Activated CD4-positive, alpha-beta T cell treated with anti-CD3 and anti-CD28 coated beads for 36 hours (primary cell): ENCODE measurements at regions of chr9 and their contacts with region 1.

Region 1: GRCh38 chr9:132354637-132355355 is at the start of gene SETX:
- DNase-seq: peak; percentile 98
- ATAC-seq: peak; percentile 81
- H3K4me3 Mint-ChIP-seq: peak within 1 kb of the TSS; percentile 79
- H3K27ac Mint-ChIP-seq: peak within 1 kb of the TSS; percentile 98
- H3K4me1 Mint-ChIP-seq: peaks cover 36% of the 10 kb centered on the region
- H3K27me3 Mint-ChIP-seq: no peaks in the 10 kb centered on the region
- total RNA-seq, gene SETX: 37.5 to 38.1 TPM

Region 2: DNA sequence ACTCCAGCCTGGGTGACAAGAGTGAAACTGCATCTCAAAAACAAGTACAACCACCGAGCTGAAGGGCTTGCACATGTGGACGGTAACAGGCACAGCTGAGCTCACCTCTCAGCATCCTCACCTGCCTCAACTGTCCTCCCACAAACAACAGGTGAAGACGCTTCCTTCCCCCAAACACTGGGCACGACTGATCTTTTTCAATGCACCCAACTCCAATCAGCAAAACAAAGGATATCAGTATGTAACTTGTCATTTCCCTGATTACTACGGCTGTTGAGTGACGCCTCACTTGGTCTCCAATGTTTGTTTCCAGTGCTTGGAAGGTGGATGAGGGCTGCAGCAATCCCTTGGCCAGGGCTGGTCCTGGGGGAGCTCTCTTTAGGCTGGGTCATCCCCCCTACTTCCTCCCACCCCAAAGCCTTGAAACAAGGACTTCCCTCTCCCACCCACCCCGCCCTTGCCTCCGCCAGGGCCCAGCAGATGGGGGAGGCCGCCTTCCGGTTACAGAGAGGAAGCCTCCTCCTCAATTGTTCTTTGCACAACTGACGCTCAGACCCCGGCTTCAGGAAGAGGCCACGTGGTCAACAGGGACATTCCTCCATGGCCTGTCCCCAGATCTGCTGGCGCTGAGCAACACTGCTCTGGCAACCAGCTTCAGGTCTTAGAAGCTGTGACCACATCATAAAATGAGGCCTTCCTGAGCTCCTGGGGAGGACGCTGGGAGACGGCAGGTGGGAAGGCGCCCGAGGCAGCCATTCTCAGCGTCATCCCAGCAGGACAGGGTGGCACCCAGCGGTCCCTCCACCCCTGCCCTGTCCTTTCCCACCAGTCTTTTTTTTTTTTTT is 1084.4 kb before region 1 on chr9:
- CTCF ChIA-PET with region 1: no interaction called
- POLR2A ChIA-PET with region 1: no interaction called
- intact Hi-C with region 1: loop called in 1 of 2 experiments (anchors 2 kb)
- DNase-seq: peak; percentile 77
- ATAC-seq: peak; percentile 13
- H3K4me3 Mint-ChIP-seq: peak overlapping the region; percentile 90
- H3K27ac Mint-ChIP-seq: peak overlapping the region; percentile 100
- H3K4me1 Mint-ChIP-seq: peaks cover 58% of the 10 kb centered on the region
- H3K27me3 Mint-ChIP-seq: no peaks in the 10 kb centered on the region

Region 3: GRCh38 chr9:131650254-131650653 is 704.5 kb before region 1 on chr9:
- CTCF ChIA-PET with region 1: no interaction called
- POLR2A ChIA-PET with region 1: no interaction called
- intact Hi-C with region 1: no loop called
- DNase-seq: no peak
- ATAC-seq: no peak
- H3K4me3 Mint-ChIP-seq: no peak overlapping the region
- H3K27ac Mint-ChIP-seq: no peak overlapping the region
- H3K4me1 Mint-ChIP-seq: peaks cover 59% of the 10 kb centered on the region
- H3K27me3 Mint-ChIP-seq: no peaks in the 10 kb centered on the region

Region 4: GRCh38 chr9:132006677-132007370 is 348.0 kb before region 1 on chr9:
- CTCF ChIA-PET with region 1: no interaction called
- POLR2A ChIA-PET with region 1: no interaction called
- intact Hi-C with region 1: loop called in 1 of 2 experiments (anchors 2 kb)
- DNase-seq: peak; percentile 65
- ATAC-seq: peak; percentile 98
- H3K4me3 Mint-ChIP-seq: no peak overlapping the region
- H3K27ac Mint-ChIP-seq: no peak overlapping the region
- H3K4me1 Mint-ChIP-seq: peaks cover 28% of the 10 kb centered on the region
- H3K27me3 Mint-ChIP-seq: no peaks in the 10 kb centered on the region

Region 5: DNA sequence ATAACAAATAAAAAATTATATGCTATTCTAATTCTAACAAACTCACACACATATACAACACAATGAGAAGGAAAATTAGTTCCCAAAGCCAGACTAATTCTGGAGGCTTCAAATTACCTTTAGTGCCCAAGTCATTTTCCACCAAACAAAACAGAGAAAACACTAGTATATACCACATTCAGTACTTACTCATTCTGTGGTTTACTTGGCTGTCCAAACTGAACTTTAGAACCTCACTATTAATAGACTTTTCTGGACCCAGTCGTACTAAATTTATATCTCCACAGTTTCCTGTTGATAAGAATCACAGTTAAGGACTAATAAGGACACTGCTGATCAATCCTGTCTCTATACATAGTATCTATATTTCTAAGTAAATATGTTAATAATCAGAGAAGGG is 66.4 kb before region 1 on chr9:
- CTCF ChIA-PET with region 1: no interaction called
- POLR2A ChIA-PET with region 1: no interaction called
- intact Hi-C with region 1: no loop called
- DNase-seq: no peak
- ATAC-seq: no peak
- H3K4me3 Mint-ChIP-seq: no peak overlapping the region
- H3K27ac Mint-ChIP-seq: no peak overlapping the region
- H3K4me1 Mint-ChIP-seq: peaks cover 22% of the 10 kb centered on the region
- H3K27me3 Mint-ChIP-seq: no peaks in the 10 kb centered on the region

Region 6: DNA sequence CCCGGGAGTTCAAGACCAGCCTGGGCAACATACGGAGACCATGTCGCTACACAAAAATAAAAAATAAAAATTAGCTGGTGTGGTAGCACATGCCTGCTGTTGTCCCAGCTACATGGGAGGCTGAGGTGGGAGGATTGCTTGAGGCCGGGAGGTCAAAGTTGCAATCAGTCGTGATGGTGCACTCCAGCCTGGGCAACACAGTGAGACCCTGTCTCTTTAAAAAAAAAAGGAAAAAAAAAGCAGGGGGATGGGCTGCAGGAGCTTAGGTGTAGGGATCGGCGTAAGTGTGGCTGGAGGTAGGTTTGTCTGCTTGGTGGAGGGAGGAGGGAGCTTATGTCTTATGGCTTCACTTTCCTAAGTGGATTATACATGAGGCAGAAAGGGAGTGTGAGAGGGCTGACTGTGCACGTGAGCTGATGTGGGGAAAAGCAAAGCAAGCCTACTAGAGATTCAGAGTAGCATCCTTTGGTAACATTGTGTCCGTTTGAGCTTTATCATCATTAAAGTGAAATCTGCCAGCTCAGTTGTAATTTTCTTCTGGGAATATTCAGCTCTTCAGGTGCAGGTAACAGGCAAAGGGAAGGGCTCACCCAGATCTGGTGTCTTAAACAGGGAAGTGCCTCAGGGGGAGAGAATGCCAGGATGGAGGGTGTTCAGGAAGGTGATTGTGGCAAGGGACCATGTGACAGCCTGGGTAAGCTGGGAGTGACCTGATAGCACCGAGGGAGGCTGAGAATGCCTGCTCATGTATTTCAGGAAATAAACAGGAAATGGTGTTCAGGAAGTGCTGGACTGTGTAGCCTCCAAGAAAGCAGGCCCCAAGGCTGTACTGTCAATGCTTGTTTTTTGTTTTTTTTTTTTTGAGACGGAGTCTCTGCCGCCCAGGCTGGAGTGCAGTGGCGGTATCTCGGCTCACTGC is 17.6 kb after region 1 on chr9:
- CTCF ChIA-PET with region 1: interaction called, 4 read pairs
- POLR2A ChIA-PET with region 1: interaction called, 5 read pairs
- intact Hi-C with region 1: loop called in 1 of 2 experiments (anchors 1 kb)
- DNase-seq: no peak
- ATAC-seq: peak; percentile 14
- H3K4me3 Mint-ChIP-seq: no peak overlapping the region
- H3K27ac Mint-ChIP-seq: peak overlapping the region; percentile 58
- H3K4me1 Mint-ChIP-seq: peaks cover 16% of the 10 kb centered on the region
- H3K27me3 Mint-ChIP-seq: no peaks in the 10 kb centered on the region

Region 7: GRCh38 chr9:132669698-132670456 is 315.1 kb after region 1 on chr9 and contains the start of gene DDX31:
- CTCF ChIA-PET with region 1: no interaction called
- POLR2A ChIA-PET with region 1: no interaction called
- intact Hi-C with region 1: loop called in 1 of 2 experiments (anchors 1 kb)
- DNase-seq: peak; percentile 91
- ATAC-seq: peak; percentile 86
- H3K4me3 Mint-ChIP-seq: peak within 1 kb of the TSS; percentile 89
- H3K27ac Mint-ChIP-seq: peak within 1 kb of the TSS; percentile 90
- H3K4me1 Mint-ChIP-seq: peaks cover 49% of the 10 kb centered on the region
- H3K27me3 Mint-ChIP-seq: no peaks in the 10 kb centered on the region
- total RNA-seq, gene DDX31: 20.9 to 21.0 TPM

Region 8: GRCh38 chr9:133030317-133031129 is 675.7 kb after region 1 on chr9 and contains the start of gene GTF3C5:
- CTCF ChIA-PET with region 1: no interaction called
- POLR2A ChIA-PET with region 1: no interaction called
- intact Hi-C with region 1: loop called in 1 of 2 experiments (anchors 5 kb)
- DNase-seq: peak; percentile 95
- ATAC-seq: peak; percentile 98
- H3K4me3 Mint-ChIP-seq: peak within 1 kb of the TSS; percentile 94
- H3K27ac Mint-ChIP-seq: peak within 1 kb of the TSS; percentile 95
- H3K4me1 Mint-ChIP-seq: peaks cover 41% of the 10 kb centered on the region
- H3K27me3 Mint-ChIP-seq: no peaks in the 10 kb centered on the region
- total RNA-seq, gene GTF3C5: 81.3 to 84.5 TPM